Activated CD8-positive, alpha-beta T cell treated with anti-CD3 and anti-CD28 coated beads for 36 hours (primary cell): ENCODE measurements at regions of chr12 and their contacts with region 1.

Region 1: DNA sequence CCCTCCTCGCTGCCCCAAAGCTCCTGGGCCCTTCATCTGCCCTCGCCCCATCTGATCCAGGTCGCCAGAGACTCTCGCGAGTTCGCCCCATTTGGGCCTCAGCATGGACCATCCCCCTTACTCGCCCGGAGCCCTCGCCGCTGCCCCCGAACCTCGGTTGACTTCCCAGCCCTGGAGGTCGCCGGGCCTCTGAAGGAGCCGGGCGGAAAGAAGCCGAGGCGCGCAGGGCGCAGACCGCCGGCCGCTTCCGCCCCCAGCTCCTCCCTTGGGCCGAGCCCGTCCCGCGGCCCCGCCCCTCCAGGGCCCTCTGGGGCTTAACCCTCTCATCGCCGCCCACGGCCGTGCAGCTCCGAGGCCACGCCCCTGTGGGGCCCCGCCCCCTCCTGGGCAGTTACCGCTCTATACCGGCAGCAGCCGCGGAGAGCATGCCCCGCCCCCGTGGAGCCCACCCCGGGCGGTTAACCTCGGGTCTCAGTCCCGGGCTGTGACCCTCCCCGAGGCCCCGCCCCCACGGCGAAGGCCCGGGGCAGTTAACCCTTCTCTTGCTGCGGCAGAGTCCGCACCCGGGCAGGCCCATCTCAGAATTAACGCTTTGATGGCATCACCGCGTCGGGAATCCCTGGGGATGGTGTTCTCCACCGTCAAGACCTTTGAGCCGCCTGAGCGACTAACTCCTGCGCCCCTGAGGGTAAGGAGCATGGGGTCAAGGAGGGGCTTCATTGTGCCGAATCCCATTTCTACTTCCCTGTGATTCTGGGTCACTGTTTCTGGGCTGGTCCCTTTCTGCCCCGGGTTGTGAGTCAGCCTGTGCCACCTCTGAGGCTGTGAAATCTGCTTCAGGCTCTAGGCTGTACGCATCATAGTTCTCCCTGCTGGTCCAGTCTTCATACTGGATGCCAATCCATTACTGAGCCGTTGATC is at the start of gene SPSB2:
- DNase-seq: peak; percentile 99
- ATAC-seq: peak; percentile 82
- H3K4me3 Mint-ChIP-seq: peak within 1 kb of the TSS; percentile 91
- H3K27ac Mint-ChIP-seq: peak within 1 kb of the TSS; percentile 89
- H3K4me1 Mint-ChIP-seq: peaks cover 45% of the 10 kb centered on the region
- H3K27me3 Mint-ChIP-seq: no peaks in the 10 kb centered on the region
- CTCF ChIP-seq: no peak
- total RNA-seq, gene SPSB2: 2.2 to 2.6 TPM

Region 2: DNA sequence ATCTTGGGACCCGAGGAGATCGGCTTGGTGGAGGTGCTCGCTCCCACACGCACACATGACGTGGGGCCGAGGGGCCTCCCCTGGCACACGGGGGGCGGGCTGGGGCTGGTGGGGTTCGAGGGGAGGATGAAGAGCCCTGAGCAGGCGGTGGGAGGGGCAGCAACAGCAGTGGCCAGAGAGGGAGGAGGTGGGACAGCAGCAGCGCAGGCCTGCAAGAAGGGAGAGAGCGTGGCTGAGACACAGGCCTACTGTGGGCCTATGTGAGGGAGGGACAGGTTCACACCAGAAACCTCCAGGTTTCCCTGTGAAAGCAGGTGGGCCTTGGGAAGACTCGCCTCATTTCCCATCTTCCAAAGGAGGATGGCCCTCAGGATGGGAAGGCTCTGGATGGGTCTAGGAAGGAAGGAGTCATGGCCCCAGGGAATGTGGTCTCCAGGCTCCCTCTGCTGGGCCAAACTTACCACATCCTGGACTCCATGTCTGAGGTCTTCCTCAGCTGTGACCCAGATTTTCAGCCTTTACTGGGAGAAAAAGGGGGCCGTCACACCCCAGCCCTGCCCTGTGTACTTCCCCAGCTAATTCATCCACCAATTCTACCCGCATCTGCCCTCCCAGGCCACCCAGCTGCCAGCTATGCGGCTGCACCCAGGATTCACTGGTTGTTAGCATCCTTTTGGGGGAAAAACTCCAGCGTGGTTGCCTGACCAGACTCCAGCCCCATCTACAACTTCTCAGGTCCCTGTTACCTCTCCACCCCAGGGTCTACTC is 175.6 kb before region 1 on chr12:
- CTCF ChIA-PET with region 1: no interaction called
- POLR2A ChIA-PET with region 1: no interaction called
- intact Hi-C with region 1: no loop called
- DNase-seq: peak; percentile 44
- ATAC-seq: no peak
- H3K4me3 Mint-ChIP-seq: no peak overlapping the region
- H3K27ac Mint-ChIP-seq: no peak overlapping the region
- H3K4me1 Mint-ChIP-seq: peaks cover 13% of the 10 kb centered on the region
- H3K27me3 Mint-ChIP-seq: peaks cover 34% of the 10 kb centered on the region
- CTCF ChIP-seq: peak; percentile 35

Region 3: GRCh38 chr12:6833189-6833890 is 40.0 kb before region 1 on chr12:
- CTCF ChIA-PET with region 1: interaction called, 14 read pairs
- POLR2A ChIA-PET with region 1: interaction called, 6 read pairs
- intact Hi-C with region 1: no loop called
- DNase-seq: no peak
- ATAC-seq: no peak
- H3K4me3 Mint-ChIP-seq: no peak overlapping the region
- H3K27ac Mint-ChIP-seq: no peak overlapping the region
- H3K4me1 Mint-ChIP-seq: peaks cover 20% of the 10 kb centered on the region
- H3K27me3 Mint-ChIP-seq: peaks cover 18% of the 10 kb centered on the region
- CTCF ChIP-seq: no peak

Region 4: GRCh38 chr12:6861391-6861790 is 12.0 kb before region 1 on chr12:
- CTCF ChIA-PET with region 1: interaction called, 124 read pairs
- POLR2A ChIA-PET with region 1: interaction called, 218 read pairs
- intact Hi-C with region 1: no loop called
- DNase-seq: no peak
- ATAC-seq: no peak
- H3K4me3 Mint-ChIP-seq: no peak overlapping the region
- H3K27ac Mint-ChIP-seq: no peak overlapping the region
- H3K4me1 Mint-ChIP-seq: peaks cover 10% of the 10 kb centered on the region
- H3K27me3 Mint-ChIP-seq: no peaks in the 10 kb centered on the region
- CTCF ChIP-seq: no peak

Region 5: GRCh38 chr12:6890789-6891645 is 17.7 kb after region 1 on chr12:
- CTCF ChIA-PET with region 1: interaction called, 41 read pairs
- POLR2A ChIA-PET with region 1: interaction called, 79 read pairs
- intact Hi-C with region 1: no loop called
- DNase-seq: peak; percentile 99
- ATAC-seq: peak; percentile 95
- H3K4me3 Mint-ChIP-seq: peak overlapping the region; percentile 73
- H3K27ac Mint-ChIP-seq: peak overlapping the region; percentile 91
- H3K4me1 Mint-ChIP-seq: peaks cover 16% of the 10 kb centered on the region
- H3K27me3 Mint-ChIP-seq: no peaks in the 10 kb centered on the region
- CTCF ChIP-seq: peak; percentile 81

Region 6: GRCh38 chr12:6927379-6928024 is 54.1 kb after region 1 on chr12 and contains the start of gene ATN1:
- CTCF ChIA-PET with region 1: interaction called, 16 read pairs
- POLR2A ChIA-PET with region 1: interaction called, 4 read pairs
- intact Hi-C with region 1: no loop called
- DNase-seq: peak; percentile 55
- ATAC-seq: peak; percentile 32
- H3K4me3 Mint-ChIP-seq: peak within 1 kb of the TSS; percentile 78
- H3K27ac Mint-ChIP-seq: peak within 1 kb of the TSS; percentile 82
- H3K4me1 Mint-ChIP-seq: peaks cover 59% of the 10 kb centered on the region
- H3K27me3 Mint-ChIP-seq: no peaks in the 10 kb centered on the region
- CTCF ChIP-seq: no peak
- total RNA-seq, gene ATN1: 26.4 to 28.5 TPM

Region 7: DNA sequence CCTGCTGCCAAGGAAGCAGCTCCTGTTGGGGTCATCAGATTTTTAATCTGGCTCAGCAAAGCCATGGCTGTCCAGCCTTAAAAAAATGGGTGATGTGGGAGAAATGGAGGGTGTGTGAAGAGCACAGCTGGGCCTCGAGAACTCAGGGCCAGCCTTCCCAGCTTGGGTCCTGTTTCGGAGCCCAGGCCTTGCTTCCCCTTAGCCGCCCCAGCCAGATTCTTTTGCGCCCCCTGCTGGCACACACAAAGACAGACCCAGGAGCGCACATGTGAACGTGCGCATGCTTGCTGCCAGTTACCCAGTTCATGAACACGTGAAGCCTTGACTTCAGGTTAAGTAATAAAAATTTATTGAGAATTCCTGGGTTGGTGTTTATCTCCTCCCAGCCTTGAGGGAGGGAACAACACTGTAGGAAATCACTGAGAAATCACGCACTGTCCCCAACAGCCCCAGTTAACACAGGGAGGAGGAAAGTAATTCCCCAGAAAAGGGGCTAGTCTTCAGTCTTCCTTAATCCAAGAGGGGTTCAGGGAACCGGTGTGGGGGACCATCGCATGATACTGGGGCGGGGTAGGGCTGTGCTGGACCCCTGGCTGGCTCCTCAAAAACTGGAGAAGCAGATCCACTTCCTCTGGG is 91.8 kb after region 1 on chr12:
- CTCF ChIA-PET with region 1: interaction called, 13 read pairs
- POLR2A ChIA-PET with region 1: interaction called, 9 read pairs
- intact Hi-C with region 1: no loop called
- DNase-seq: peak; percentile 92
- ATAC-seq: peak; percentile 35
- H3K4me3 Mint-ChIP-seq: peak overlapping the region; percentile 0
- H3K27ac Mint-ChIP-seq: peak overlapping the region; percentile 91
- H3K4me1 Mint-ChIP-seq: peaks cover 76% of the 10 kb centered on the region
- H3K27me3 Mint-ChIP-seq: no peaks in the 10 kb centered on the region
- CTCF ChIP-seq: peak; percentile 95

Region 8: DNA sequence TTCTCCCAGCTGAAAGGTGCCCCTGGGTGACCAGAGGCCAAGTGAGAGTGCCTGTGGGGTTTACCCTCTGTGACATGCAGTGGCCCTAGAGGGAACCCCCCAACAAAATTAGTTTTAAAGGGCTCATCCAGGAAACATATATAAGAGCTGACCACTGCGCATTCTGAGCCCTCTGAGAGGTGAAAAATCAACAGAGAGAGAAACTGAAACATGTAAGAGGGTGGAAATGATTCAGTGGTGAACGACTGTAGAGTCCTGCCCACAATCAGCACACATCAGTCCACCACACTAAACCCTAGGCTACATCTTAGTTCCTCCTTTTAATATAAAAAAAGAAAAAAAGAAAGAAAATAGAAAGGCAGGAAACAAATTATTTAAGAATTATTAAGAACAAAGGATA is 409.5 kb after region 1 on chr12:
- CTCF ChIA-PET with region 1: no interaction called
- POLR2A ChIA-PET with region 1: no interaction called
- intact Hi-C with region 1: no loop called
- DNase-seq: no peak
- ATAC-seq: no peak
- H3K4me3 Mint-ChIP-seq: no peak overlapping the region
- H3K27ac Mint-ChIP-seq: no peak overlapping the region
- H3K4me1 Mint-ChIP-seq: no peaks in the 10 kb centered on the region
- H3K27me3 Mint-ChIP-seq: peaks cover 12% of the 10 kb centered on the region
- CTCF ChIP-seq: no peak